ENCODE measurements at regions of chr7 and their contacts with region 1.

Region 1: DNA sequence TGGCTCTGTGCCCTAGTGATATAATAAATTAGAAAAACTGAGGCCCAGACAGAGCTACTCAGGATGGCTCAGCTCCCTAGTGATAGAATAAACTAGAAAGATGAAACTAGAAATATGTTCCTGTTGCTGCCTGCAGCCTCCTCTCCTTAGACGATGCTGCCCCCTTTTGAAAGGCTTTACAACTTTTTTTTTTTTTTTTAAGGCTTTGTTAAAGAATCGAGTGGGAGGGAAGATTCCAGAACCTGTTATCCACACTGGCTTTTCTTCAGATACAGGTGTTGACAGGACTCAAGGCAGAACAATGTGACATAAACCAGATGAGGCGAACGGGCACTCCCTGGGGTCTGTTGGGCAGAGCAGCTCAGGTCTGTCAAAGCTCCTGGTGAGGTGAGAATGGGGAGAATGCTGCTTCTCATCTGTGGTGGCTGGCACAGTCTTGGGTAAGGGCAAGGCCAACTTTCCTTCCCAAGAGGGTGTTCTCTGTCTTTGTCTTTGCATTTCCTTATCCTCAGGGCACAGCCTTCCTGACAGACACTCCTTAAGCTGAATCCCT is 175.1 kb downstream of the COBL start:
- DNase-seq: no peak
- ATAC-seq: peak; percentile 55 to 81 (median 72)
- H3K4me3 ChIP-seq: no peak overlapping the region
- H3K27ac ChIP-seq: peak overlapping the region in 9 of 12 donors; percentile 23 to 69 (median 56)
- H3K4me1 ChIP-seq: peaks cover 2 to 44% (median 24%) of the 10 kb centered on the region in 12 donors
- H3K27me3 ChIP-seq: no peaks in the 10 kb centered on the region
- CTCF ChIP-seq: peak; percentile 43 to 81 (median 66)
- POLR2A ChIP-seq: no peak

Region 2: GRCh38 chr7:50610521-50611277 is 530.8 kb before region 1 on chr7:
- intact Hi-C with region 1: loop called in 5 of 10 experiments (anchors 2 to 10 kb)
- DNase-seq: no peak
- ATAC-seq: no peak
- H3K4me3 ChIP-seq: no peak overlapping the region
- H3K27ac ChIP-seq: peak overlapping the region in 1 of 12 donors; percentile 62
- H3K4me1 ChIP-seq: peaks cover 0 to 27% (median 0%) of the 10 kb centered on the region in 12 donors
- H3K27me3 ChIP-seq: no peaks in the 10 kb centered on the region
- CTCF ChIP-seq: no peak
- POLR2A ChIP-seq: no peak

Region 3: DNA sequence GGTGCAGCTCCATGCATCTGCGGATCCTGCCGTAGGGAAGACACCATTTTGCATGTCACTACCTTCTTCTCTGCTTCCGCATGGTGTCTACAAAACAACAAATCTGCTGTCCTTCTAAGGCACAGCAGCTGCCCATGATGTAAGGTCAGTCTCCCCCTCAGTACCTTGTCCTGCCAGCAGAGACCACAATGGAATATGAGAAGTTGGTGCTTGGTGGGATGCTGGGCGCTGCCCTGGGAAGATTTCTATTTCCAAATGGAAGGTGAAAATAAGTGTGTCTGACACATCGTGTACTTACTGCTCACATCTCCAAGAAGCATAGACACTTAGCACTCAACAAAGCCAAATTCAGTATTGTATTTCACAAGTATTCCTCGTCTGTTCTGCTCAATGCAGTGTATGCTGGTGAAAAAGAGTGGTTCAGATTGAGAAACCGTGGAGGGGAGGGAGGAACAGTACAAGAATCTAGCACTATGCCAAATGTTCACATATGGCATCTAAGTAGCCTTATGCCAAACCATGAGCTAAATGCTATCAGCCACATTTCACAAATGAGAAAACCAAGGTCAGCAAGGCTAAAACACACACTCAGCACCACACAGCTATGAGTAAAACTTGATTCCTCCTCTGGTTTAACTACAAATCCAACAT is 453.8 kb before region 1 on chr7:
- intact Hi-C with region 1: loop called in 6 of 10 experiments (anchors 5 to 10 kb)
- DNase-seq: no peak
- ATAC-seq: peak in 3 of 4 donors; percentile 53 to 73 (median 60)
- H3K4me3 ChIP-seq: no peak overlapping the region
- H3K27ac ChIP-seq: peak overlapping the region in 5 of 12 donors; percentile 2 to 75 (median 20)
- H3K4me1 ChIP-seq: peaks cover 6 to 39% (median 28%) of the 10 kb centered on the region in 12 donors
- H3K27me3 ChIP-seq: no peaks in the 10 kb centered on the region
- CTCF ChIP-seq: no peak
- POLR2A ChIP-seq: no peak

Region 4: DNA sequence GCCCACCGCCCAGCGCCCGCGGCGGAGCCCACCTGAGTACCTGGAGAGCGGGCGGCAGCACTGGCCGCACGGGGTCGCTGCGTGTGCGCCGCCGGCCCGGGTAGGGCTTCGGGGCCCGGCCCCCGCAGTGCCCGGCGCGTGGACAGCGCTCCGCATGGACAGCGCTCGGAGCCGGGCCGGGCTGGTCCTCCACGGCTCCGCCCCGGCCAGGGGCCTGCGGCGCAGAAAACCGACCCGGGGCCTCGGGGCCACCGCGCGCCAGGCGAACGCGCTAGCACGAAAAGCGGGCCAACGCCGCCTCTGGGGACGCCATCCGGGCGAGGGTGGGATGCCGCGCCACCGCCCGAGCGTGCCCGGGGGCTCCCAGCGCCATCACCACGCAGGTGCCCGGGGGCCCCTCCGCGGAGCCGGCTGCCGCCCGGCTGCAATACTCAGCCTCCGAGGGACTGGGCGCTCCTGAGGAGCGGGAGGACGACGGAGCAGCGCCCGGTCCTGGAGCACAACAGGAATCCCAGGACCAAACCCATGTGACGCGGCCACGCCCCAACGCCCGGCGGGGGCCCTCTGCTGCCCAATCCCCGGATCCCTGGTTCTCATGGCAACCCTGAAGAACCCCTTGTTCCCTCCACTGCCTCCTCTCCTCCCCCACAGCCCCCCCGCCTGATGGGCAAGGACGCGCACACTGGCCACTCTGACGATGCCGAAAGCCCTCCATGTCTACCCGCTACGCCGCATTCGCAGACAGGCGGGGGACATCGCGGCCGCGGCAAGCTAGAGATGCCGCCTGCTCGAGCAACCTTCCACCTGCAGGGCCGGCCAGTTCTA is 358.9 kb before region 1 on chr7 and contains the start of gene GRB10:
- intact Hi-C with region 1: loop called in 7 of 10 experiments (anchors 5 to 10 kb)
- DNase-seq: peak in 4 of 5 donors; percentile 34 to 51 (median 48)
- ATAC-seq: peak; percentile 32 to 87 (median 69)
- H3K4me3 ChIP-seq: peak within 1 kb of the TSS; percentile 29 to 70 (median 58)
- H3K27ac ChIP-seq: peak within 1 kb of the TSS in 6 of 12 donors; percentile 39 to 61 (median 52)
- H3K4me1 ChIP-seq: peaks cover 0 to 63% (median 36%) of the 10 kb centered on the region in 12 donors
- H3K27me3 ChIP-seq: peaks cover 0 to 6% (median 0%) of the 10 kb centered on the region in 9 donors
- CTCF ChIP-seq: peak in 10 of 12 donors; percentile 16 to 52 (median 34)
- POLR2A ChIP-seq: no peak
- total RNA-seq, gene GRB10: 20.4 to 38.2 (median 29.1) TPM

Region 5: GRCh38 chr7:51080622-51081269 is 60.8 kb before region 1 on chr7:
- intact Hi-C with region 1: loop called in 1 of 10 experiments (anchors 5 kb)
- DNase-seq: peak in 1 of 5 donors; percentile 51
- ATAC-seq: peak; percentile 24 to 75 (median 65)
- H3K4me3 ChIP-seq: no peak overlapping the region
- H3K27ac ChIP-seq: peak overlapping the region in 7 of 12 donors; percentile 5 to 59 (median 39)
- H3K4me1 ChIP-seq: peaks cover 0 to 50% (median 12%) of the 10 kb centered on the region in 12 donors
- H3K27me3 ChIP-seq: no peaks in the 10 kb centered on the region
- CTCF ChIP-seq: no peak
- POLR2A ChIP-seq: no peak